Activated CD4-positive, alpha-beta memory T cell treated with anti-CD3 and anti-CD28 coated beads for 36 hours (primary cell): ENCODE measurements at regions of chr22 and their contacts with region 1.

Region 1: DNA sequence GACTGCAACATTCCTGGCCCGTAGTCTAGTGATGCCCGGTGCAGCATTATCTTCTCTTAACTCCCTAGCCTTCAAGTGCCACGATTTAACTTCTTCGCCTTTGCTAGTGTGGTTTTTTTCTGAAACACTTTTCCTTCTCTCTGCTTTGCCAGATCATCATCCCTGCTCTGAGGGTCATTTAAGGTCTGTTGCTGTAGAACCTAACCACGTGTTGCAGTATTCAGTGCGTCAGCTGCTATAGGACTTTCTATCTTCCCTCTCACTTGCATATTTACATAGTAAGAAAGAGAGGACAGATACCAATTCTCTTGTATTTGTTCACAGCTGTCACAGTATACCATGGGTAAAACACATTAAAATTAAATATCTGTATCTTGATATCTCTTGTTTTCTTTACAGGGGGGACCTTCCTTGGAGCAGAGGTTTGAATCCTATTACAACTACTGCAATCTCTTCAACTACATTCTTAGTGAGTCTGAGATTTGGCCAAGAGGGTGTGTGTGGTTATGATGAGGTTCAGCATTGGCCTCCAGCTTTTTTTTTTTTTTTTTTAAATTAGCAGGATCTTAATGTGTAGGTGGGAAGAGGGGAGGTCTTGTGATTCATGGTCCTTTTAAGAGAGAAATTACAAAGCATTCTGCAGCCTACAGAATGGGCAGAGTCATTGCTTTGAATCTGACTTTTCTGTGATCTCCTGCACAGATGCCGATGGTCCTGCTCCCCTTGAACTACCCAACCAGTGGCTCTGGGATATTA is 13.5 kb downstream of the EIF3L start:
- DNase-seq: no peak
- H3K4me3 Mint-ChIP-seq: no peak overlapping the region
- H3K27ac Mint-ChIP-seq: no peak overlapping the region
- H3K4me1 Mint-ChIP-seq: peaks cover 12% of the 10 kb centered on the region
- H3K27me3 Mint-ChIP-seq: no peaks in the 10 kb centered on the region

Region 2: GRCh38 chr22:37492428-37493344 is 370.1 kb before region 1 on chr22:
- CTCF ChIA-PET with region 1: no interaction called
- POLR2A ChIA-PET with region 1: no interaction called
- intact Hi-C with region 1: no loop called
- DNase-seq: peak; percentile 77
- H3K4me3 Mint-ChIP-seq: no peak overlapping the region
- H3K27ac Mint-ChIP-seq: peak overlapping the region; percentile 2
- H3K4me1 Mint-ChIP-seq: peaks cover 30% of the 10 kb centered on the region
- H3K27me3 Mint-ChIP-seq: no peaks in the 10 kb centered on the region

Region 3: GRCh38 chr22:37643225-37643847 is 219.4 kb before region 1 on chr22:
- CTCF ChIA-PET with region 1: interaction called, 11 read pairs
- POLR2A ChIA-PET with region 1: no interaction called
- intact Hi-C with region 1: no loop called
- DNase-seq: peak; percentile 91
- H3K4me3 Mint-ChIP-seq: peak overlapping the region; percentile 29
- H3K27ac Mint-ChIP-seq: peak overlapping the region; percentile 76
- H3K4me1 Mint-ChIP-seq: peaks cover 32% of the 10 kb centered on the region
- H3K27me3 Mint-ChIP-seq: no peaks in the 10 kb centered on the region

Region 4: DNA sequence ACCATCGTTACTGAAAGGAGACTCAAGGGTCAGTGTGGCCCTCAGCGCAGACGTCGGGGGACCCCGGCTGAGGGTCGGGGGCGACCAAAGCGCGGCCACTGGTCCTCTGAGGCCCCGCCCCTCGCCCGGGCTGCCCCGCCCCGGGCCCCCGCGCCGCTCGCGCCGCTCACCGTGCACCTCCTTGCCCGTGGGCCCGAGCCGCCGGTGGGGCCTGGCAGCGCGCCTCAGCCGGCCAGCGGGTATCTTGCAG is 19.1 kb before region 1 on chr22:
- CTCF ChIA-PET with region 1: interaction called, 19 read pairs
- POLR2A ChIA-PET with region 1: interaction called, 4 read pairs
- intact Hi-C with region 1: loop called (anchors 2 kb)
- DNase-seq: peak; percentile 60
- H3K4me3 Mint-ChIP-seq: peak overlapping the region; percentile 84
- H3K27ac Mint-ChIP-seq: peak overlapping the region; percentile 87
- H3K4me1 Mint-ChIP-seq: peaks cover 26% of the 10 kb centered on the region
- H3K27me3 Mint-ChIP-seq: no peaks in the 10 kb centered on the region

Region 5: DNA sequence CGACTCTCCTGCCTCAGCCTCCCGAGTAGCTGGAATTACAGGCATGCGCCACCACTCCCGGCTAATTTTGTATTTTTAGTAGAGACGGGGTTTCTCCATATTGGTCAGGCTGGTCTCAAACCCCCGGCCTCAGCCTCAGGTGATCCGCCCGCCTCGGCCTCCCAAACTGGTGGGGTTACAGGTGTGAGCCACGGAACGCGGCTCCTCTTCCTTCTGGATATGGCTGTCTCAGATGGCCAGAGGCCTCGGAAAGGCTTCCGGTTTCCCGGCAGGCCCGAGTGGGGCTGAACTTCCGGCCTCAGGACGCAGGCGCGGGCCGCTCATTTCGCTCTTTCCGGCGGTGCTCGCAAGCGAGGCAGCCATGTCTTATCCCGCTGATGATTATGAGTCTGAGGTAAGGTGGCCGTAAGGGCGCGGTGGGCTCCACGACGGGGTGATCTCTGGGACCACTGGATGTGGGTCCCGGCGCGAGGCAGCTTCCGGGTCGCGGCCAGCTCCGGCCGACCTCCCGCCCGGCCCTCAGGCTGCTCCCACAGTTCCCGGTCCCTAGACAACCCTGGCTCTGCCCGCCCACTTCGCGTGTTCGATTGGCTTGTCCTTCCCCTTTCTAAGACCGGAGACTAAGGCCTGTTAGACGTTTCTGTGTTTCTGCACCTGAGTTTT is 13.5 kb before region 1 on chr22 and contains the start of gene EIF3L:
- CTCF ChIA-PET with region 1: interaction called, 45 read pairs
- POLR2A ChIA-PET with region 1: interaction called, 4 read pairs
- intact Hi-C with region 1: loop called (anchors 2 kb)
- DNase-seq: peak; percentile 94
- H3K4me3 Mint-ChIP-seq: peak within 1 kb of the TSS; percentile 91
- H3K27ac Mint-ChIP-seq: peak within 1 kb of the TSS; percentile 93
- H3K4me1 Mint-ChIP-seq: peaks cover 45% of the 10 kb centered on the region
- H3K27me3 Mint-ChIP-seq: no peaks in the 10 kb centered on the region
- total RNA-seq, gene EIF3L: 656 to 664 TPM

Region 6: GRCh38 chr22:37880668-37881440 is 18.1 kb after region 1 on chr22:
- CTCF ChIA-PET with region 1: interaction called, 21 read pairs
- POLR2A ChIA-PET with region 1: no interaction called
- intact Hi-C with region 1: no loop called
- DNase-seq: no peak
- H3K4me3 Mint-ChIP-seq: no peak overlapping the region
- H3K27ac Mint-ChIP-seq: no peak overlapping the region
- H3K4me1 Mint-ChIP-seq: peaks cover 3% of the 10 kb centered on the region
- H3K27me3 Mint-ChIP-seq: no peaks in the 10 kb centered on the region

Region 7: GRCh38 chr22:37887610-37888378 is 25.0 kb after region 1 on chr22:
- CTCF ChIA-PET with region 1: interaction called, 10 read pairs
- POLR2A ChIA-PET with region 1: no interaction called
- intact Hi-C with region 1: no loop called
- DNase-seq: no peak
- H3K4me3 Mint-ChIP-seq: no peak overlapping the region
- H3K27ac Mint-ChIP-seq: no peak overlapping the region
- H3K4me1 Mint-ChIP-seq: peaks cover 3% of the 10 kb centered on the region
- H3K27me3 Mint-ChIP-seq: no peaks in the 10 kb centered on the region

Region 8: DNA sequence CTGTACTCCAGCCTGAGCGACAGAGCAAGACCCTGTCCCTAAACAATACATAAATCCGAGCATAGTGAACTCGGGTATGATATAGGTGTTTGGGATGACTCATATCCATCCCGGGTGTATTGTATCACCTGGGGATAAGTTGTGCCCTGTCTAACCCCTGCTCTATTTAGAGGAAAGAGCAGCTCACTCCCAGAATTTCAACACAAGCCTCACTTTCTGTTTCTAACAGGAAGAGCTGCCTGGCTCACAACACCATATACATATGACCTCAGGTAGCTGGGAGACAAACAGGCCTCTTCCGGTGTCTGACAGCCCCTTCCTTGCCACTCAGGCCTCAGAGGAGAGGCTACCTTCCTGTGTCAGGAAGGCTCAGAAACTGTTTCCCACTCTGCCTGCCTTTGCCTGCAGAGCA is 33.4 kb after region 1 on chr22:
- CTCF ChIA-PET with region 1: interaction called, 11 read pairs
- POLR2A ChIA-PET with region 1: no interaction called
- intact Hi-C with region 1: no loop called
- DNase-seq: peak; percentile 71
- H3K4me3 Mint-ChIP-seq: no peak overlapping the region
- H3K27ac Mint-ChIP-seq: peak overlapping the region; percentile 93
- H3K4me1 Mint-ChIP-seq: peaks cover 22% of the 10 kb centered on the region
- H3K27me3 Mint-ChIP-seq: no peaks in the 10 kb centered on the region

Region 9: GRCh38 chr22:38034274-38034882 is 171.6 kb after region 1 on chr22:
- CTCF ChIA-PET with region 1: no interaction called
- POLR2A ChIA-PET with region 1: no interaction called
- intact Hi-C with region 1: no loop called
- DNase-seq: no peak
- H3K4me3 Mint-ChIP-seq: no peak overlapping the region
- H3K27ac Mint-ChIP-seq: no peak overlapping the region
- H3K4me1 Mint-ChIP-seq: no peaks in the 10 kb centered on the region
- H3K27me3 Mint-ChIP-seq: no peaks in the 10 kb centered on the region